AG04449 (cell line): ENCODE measurements at regions of chr10 and their contacts with region 1.

Region 1: DNA sequence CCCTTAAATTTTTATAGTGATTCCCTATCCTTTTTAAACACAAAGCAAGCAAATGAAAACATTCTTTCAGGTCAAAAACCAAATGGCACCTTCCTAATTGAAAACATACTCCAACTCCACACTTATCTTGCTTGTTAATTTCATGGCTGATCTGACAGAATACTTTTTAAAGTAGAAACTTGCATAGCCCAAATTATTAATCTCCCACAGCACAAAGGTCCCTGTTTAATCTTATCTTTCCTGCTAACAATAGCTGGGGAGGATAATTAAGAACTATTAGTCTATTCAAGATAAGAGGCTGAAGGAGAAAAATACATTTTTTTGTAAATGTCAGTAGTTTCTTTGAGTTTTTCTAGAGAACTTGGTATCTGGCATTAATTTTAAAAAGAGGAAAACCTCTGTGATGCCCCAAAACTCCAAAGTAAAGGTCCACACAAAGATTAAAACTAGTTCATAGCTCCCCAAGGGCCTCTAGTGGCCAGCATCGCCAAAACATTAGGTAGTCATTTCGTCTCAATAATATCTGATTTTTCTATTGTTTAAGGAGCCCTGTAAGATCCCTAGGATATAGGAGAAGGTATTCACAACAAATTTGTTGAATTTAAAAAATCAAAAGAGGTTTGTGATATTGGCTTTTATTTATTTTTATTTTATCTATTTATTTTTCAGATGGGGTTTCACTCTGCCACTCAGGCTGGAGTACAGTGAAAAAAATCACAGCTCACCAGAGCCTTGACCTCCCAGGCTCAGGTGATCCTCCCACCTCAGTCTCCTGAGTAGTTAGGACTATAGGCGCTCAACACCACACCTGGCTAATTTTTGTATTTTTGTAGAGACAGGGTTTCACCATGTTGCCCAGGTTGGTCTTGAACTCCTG is 14.7 kb downstream of the CDNF start:
- DNase-seq: no peak
- H3K4me3 ChIP-seq: no peak overlapping the region
- CTCF ChIP-seq: peak; percentile 54

Region 2: DNA sequence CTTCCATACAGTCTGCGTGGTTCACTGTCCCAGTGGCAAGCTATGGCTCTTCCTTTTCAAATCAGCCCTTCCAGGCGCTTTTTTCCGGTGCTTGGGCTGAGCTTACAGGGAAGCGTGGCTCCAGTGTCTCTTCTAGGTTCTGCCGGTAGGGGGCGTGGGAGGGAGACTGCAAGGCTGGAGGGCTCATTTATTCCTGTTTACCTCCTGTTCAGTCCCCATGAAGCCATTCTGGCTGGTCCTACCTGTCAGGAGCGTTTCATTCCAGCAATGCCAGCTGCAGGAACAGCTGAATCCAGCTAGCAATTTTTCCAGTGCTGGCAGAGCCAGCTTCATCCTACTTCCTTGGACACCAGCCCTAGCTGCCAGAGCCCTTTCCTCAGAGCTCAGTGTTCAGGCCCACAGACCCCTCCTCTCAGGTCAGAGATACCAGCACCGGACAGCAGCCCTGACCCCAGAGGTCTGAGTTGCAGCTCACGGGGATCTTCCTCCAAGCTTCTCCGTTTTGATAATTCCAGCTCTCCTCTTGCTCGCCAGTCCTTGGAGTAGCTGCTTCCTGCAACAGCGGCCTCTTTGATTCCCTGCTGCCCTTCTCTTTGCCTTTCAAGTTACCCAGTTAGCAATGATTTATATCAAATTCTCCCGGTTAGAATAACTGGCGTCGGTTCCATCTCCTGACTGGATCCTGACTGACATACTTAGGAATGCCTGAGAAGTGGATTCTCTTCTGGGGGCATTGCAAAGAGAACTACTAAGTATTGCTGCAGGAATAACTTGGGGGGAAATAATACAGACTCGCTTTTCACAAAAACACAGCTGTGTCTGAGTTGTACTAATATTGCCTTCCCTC is 622.2 kb before region 1 on chr10:
- CTCF ChIA-PET with region 1: interaction called, 13 read pairs
- POLR2A ChIA-PET with region 1: no interaction called
- DNase-seq: no peak
- H3K4me3 ChIP-seq: no peak overlapping the region
- CTCF ChIP-seq: no peak

Region 3: GRCh38 chr10:14500172-14500765 is 322.8 kb before region 1 on chr10:
- CTCF ChIA-PET with region 1: interaction called, 33 read pairs
- POLR2A ChIA-PET with region 1: no interaction called
- DNase-seq: no peak
- H3K4me3 ChIP-seq: no peak overlapping the region
- CTCF ChIP-seq: no peak

Region 4: DNA sequence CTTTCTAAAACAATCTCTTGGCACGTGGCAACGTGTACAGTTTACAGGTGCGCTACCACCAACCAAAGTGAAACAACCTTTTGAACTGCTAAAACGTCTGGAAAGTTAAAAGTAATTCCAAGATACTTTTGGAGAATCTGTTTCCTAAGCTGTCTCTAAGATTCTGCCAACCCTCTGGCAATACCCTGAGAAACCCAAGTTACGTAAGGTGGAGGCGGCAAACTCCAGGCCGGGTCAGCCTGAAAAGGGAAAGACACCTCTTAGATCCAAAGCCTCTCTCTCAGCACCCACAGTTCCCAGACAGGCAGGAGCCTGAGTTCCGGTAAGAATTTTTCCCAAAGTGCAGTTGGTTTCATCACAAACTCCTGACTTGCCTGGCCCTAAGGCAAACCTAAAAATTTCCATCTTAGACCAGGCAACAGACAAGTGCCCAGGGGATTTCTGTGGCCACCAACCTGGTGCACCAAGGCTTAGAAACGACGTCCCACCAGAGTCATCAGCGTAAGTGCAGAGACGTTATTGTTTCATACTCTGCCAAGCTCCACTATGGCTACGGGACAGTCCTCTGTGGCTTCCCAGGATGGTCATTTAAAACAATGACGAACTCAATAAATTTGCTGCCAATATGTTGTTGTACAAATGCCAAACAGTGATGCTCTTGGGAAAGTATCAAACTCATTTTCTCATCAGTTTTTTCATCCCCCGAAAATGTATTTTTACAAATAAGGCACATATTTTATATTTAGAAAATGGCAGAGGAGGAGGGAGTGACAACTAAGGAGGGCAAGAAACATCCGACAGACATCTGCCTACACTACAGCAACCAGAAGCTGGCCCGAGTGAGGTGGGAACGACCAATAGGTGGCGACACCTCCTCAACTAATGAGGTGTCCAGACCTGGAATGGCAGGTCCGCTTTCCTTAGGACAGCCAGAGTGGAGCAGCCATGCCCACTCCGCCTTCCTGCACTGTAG is 286.6 kb before region 1 on chr10:
- CTCF ChIA-PET with region 1: interaction called, 63 read pairs
- POLR2A ChIA-PET with region 1: no interaction called
- DNase-seq: no peak
- H3K4me3 ChIP-seq: no peak overlapping the region
- CTCF ChIP-seq: peak; percentile 68

Region 5: GRCh38 chr10:14837757-14838581 is 14.9 kb after region 1 on chr10 and contains the starts of genes CDNF, HSPA14 and MSANTD7:
- CTCF ChIA-PET with region 1: interaction called, 31 read pairs
- POLR2A ChIA-PET with region 1: interaction called, 3 read pairs
- DNase-seq: peak; percentile 92
- H3K4me3 ChIP-seq: peak within 1 kb of the TSS; percentile 98
- CTCF ChIP-seq: no peak